Activated naive CD4-positive, alpha-beta T cell treated with anti-CD3 and anti-CD28 coated beads for 36 hours (primary cell): ENCODE measurements at regions of chr3 and their contacts with region 1.

Region 1: DNA sequence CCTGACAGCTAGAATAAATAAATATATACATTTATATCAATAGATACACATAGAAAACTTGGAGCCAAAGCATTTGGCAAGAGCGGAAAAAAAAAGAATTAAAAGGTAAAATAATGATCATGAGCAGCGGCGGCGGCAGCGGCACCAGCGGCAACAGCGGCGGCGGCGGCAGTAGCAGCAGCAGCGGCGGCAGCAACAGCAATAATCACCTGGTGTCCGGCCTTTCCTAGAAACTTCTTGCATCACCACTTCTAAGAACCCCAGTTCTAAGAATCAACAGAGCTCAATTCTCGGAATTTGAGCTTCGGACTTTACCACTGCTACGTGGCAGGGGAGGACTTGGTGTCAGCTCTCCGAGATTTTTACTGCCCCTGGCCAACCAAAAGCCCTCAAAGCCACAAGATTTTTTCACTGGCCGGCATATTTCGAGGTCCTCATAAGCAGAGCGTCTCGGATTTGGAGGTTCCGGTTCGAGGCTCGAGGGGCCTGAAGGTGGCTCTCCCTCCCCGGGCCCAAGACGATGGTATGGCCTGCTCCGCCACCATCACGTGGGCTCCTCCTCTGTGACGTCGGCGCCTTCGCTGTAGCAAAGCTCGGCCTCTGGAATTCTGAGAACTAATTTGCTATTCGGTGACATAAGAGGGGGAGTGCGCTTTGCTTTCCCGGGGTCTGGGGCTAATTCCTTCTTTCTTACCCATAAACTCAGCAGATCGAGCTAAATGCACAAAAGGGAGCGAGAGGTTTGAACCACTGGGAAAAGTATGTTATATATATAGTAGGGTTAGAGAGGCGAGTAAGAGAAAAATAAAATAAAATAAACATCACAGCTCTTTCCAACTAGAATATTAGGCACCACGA is at the start of gene BCL6:
- DNase-seq: peak; percentile 92
- H3K4me3 Mint-ChIP-seq: peak within 1 kb of the TSS; percentile 86
- H3K27ac Mint-ChIP-seq: peak within 1 kb of the TSS; percentile 97
- H3K4me1 Mint-ChIP-seq: peaks cover 46% of the 10 kb centered on the region
- H3K27me3 Mint-ChIP-seq: no peaks in the 10 kb centered on the region
- total RNA-seq, gene BCL6: 98.9 to 101 TPM

Region 2: GRCh38 chr3:187777331-187777941 is 32.0 kb after region 1 on chr3:
- CTCF ChIA-PET with region 1: interaction called, 6 read pairs
- intact Hi-C with region 1: loop called (anchors 1 kb)
- DNase-seq: peak; percentile 76
- H3K4me3 Mint-ChIP-seq: peak overlapping the region; percentile 48
- H3K27ac Mint-ChIP-seq: peak overlapping the region; percentile 96
- H3K4me1 Mint-ChIP-seq: peaks cover 31% of the 10 kb centered on the region
- H3K27me3 Mint-ChIP-seq: no peaks in the 10 kb centered on the region

Region 3: GRCh38 chr3:187831125-187832051 is 86.0 kb after region 1 on chr3:
- CTCF ChIA-PET with region 1: interaction called, 4 read pairs
- intact Hi-C with region 1: loop called (anchors 1 kb)
- DNase-seq: no peak
- H3K4me3 Mint-ChIP-seq: no peak overlapping the region
- H3K27ac Mint-ChIP-seq: no peak overlapping the region
- H3K4me1 Mint-ChIP-seq: peaks cover 30% of the 10 kb centered on the region
- H3K27me3 Mint-ChIP-seq: no peaks in the 10 kb centered on the region

Region 4: GRCh38 chr3:188170461-188171459 is 425.3 kb after region 1 on chr3:
- CTCF ChIA-PET with region 1: interaction called, 5 read pairs
- intact Hi-C with region 1: loop called (anchors 1 kb)
- DNase-seq: peak; percentile 89
- H3K4me3 Mint-ChIP-seq: peak overlapping the region; percentile 39
- H3K27ac Mint-ChIP-seq: peak overlapping the region; percentile 86
- H3K4me1 Mint-ChIP-seq: peaks cover 64% of the 10 kb centered on the region
- H3K27me3 Mint-ChIP-seq: no peaks in the 10 kb centered on the region

Region 5: GRCh38 chr3:188286087-188286513 is 540.7 kb after region 1 on chr3:
- CTCF ChIA-PET with region 1: interaction called, 22 read pairs
- intact Hi-C with region 1: loop called (anchors 1 kb)
- DNase-seq: peak; percentile 32
- H3K4me3 Mint-ChIP-seq: no peak overlapping the region
- H3K27ac Mint-ChIP-seq: no peak overlapping the region
- H3K4me1 Mint-ChIP-seq: peaks cover 45% of the 10 kb centered on the region
- H3K27me3 Mint-ChIP-seq: no peaks in the 10 kb centered on the region

Region 6: DNA sequence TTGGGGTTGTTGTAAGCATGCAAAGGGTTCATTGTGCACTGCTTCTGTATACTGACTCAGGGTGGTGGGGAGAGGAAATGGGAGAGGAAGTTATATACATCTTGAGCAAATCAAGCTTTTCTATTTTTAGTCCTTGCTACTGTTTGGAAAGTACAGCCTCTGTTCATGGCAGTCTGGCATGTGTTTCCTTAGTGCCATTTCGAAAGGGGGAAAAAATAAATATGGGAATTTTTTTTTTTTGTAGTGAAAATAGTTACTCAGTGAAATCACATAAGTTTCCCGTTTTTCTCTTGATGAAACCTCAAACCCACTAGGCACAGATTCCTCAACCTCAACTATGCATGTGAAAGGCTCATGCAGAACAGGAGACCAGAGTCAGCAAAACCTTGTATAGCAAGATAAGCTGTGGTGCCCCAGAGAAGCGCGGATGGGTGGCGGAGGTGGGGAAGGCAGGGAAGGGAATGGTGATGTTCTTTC is 761.9 kb after region 1 on chr3:
- CTCF ChIA-PET with region 1: interaction called, 3 read pairs
- intact Hi-C with region 1: loop called (anchors 10 kb)
- DNase-seq: no peak
- H3K4me3 Mint-ChIP-seq: no peak overlapping the region
- H3K27ac Mint-ChIP-seq: no peak overlapping the region
- H3K4me1 Mint-ChIP-seq: peaks cover 9% of the 10 kb centered on the region
- H3K27me3 Mint-ChIP-seq: no peaks in the 10 kb centered on the region

Region 7: DNA sequence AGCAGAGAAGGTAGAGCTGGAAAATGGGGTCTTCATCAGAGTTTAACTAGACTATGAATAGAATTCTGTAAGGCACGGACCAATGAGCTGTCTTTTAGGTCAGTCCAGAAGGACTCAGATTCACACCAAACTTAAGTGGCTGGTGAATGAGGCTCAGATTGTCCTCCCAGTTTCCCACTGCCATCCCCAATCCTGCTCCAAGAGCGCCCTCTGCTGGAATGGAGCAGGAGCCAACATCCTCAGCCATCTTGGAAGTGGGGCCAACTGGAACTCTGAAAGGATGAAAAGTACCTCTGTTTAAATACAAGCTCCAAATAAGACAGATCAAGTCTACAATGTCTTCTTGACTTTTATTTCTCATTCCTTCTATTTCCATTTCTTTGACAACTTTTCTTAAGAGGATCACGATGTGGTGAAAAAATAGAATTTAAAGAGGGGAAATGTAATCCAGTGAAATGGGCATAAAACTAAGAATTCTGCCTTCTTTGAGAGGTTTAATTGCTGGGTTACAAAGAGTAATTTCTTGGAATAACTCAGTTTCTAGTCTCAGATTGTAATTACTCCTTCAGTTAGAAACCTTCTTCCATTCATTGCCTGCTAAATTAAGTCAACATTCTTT is 1209.3 kb after region 1 on chr3:
- CTCF ChIA-PET with region 1: interaction called, 245 read pairs
- intact Hi-C with region 1: loop called (anchors 1 kb)
- DNase-seq: peak; percentile 91
- H3K4me3 Mint-ChIP-seq: no peak overlapping the region
- H3K27ac Mint-ChIP-seq: no peak overlapping the region
- H3K4me1 Mint-ChIP-seq: peaks cover 39% of the 10 kb centered on the region
- H3K27me3 Mint-ChIP-seq: no peaks in the 10 kb centered on the region